ENCODE measurements at regions of chr2 and their contacts with region 1.

Region 1: GRCh38 chr2:238187618-238188548 is 15.6 kb downstream of the ILKAP start:
- DNase-seq: no peak
- ATAC-seq: no peak
- H3K4me3 ChIP-seq: no peak overlapping the region
- H3K4me3 Mint-ChIP-seq: no peak overlapping the region
- H3K27ac ChIP-seq: no peak overlapping the region
- H3K27ac Mint-ChIP-seq: peak overlapping the region; percentile 57 to 93
- H3K4me1 ChIP-seq: peaks cover 31% of the 10 kb centered on the region
- H3K4me1 Mint-ChIP-seq: peaks cover 47 to 53% of the 10 kb centered on the region in 2 donors
- H3K27me3 ChIP-seq: no peaks in the 10 kb centered on the region
- H3K27me3 Mint-ChIP-seq: no peaks in the 10 kb centered on the region
- CTCF ChIP-seq: no peak

Region 2: GRCh38 chr2:238239872-238240751 is 52.2 kb after region 1 on chr2 and contains the start of gene HES6:
- intact Hi-C with region 1: loop called (anchors 5 kb)
- DNase-seq: peak; percentile 83 to 86
- ATAC-seq: peak; percentile 85 to 90 (median 85)
- H3K4me3 ChIP-seq: peak within 1 kb of the TSS; percentile 47
- H3K4me3 Mint-ChIP-seq: peak within 1 kb of the TSS; percentile 89
- H3K27ac ChIP-seq: no peak within 1 kb of the TSS
- H3K27ac Mint-ChIP-seq: peak within 1 kb of the TSS; percentile 35 to 71
- H3K4me1 ChIP-seq: peaks cover 22% of the 10 kb centered on the region
- H3K4me1 Mint-ChIP-seq: peaks cover 0 to 16% of the 10 kb centered on the region in 2 donors
- H3K27me3 ChIP-seq: peaks cover 20% of the 10 kb centered on the region
- H3K27me3 Mint-ChIP-seq: peaks cover 0 to 14% of the 10 kb centered on the region in 2 donors
- CTCF ChIP-seq: no peak
- total RNA-seq, gene HES6: 11.3 to 15.4 (median 13.5) TPM